Head of caudate nucleus (tissue), 42 donors: ENCODE measurements at regions of chr9 and their contacts with region 1.

Region 1: DNA sequence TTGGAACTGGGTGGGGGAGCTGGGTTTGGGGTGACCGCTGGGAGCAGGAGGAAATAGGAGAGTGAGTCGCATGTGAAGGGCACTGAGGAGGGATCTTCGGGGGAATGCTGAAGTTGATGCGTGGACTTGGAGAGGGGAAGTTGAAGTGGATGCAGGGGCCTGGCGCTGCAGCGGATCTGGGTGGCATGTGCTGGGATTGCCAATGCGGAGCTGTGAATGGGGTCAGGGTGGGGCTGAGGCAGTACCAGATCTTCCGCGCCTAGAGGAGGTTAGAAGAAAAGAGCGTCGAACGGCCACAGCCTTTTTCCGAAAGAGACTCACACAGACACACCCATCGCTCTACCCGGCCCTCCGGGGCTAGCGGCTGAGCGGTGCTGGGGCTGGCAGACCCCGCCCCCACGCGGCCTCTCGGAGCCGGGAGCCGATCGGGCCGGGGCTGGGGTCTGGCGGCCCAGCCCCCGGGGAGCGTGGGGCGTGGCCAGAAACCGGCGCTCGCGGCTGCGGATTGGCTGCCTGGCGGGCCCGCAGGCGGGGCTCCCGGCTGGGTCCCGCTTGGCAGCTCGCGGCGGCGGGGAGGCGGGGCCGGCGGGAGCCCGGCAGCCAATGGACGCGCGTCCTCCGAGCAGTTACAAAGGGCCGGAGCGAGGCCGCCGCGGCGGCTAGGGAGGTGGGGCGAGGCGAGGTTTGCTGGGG is at the start of gene TGFBR1:
- DNase-seq: peak; percentile 77 to 98 (median 95)

Region 2: GRCh38 chr9:98974994-98975712 is 129.5 kb before region 1 on chr9:
- intact Hi-C with region 1: loop called (anchors 10 kb)
- DNase-seq: peak; percentile 48 to 94 (median 85)

Region 3: GRCh38 chr9:99057665-99058625 is 46.7 kb before region 1 on chr9:
- intact Hi-C with region 1: loop called (anchors 10 kb)
- DNase-seq: peak in 21 of 42 donors; percentile 25 to 58 (median 38)